Posterior cingulate gyrus (tissue), 11 donors: ENCODE measurements at regions of chr5 and their contacts with region 1.

Region 1: GRCh38 chr5:87791869-87792268 is 379.1 kb upstream of the CCNH start:
- DNase-seq: no peak

Region 2: DNA sequence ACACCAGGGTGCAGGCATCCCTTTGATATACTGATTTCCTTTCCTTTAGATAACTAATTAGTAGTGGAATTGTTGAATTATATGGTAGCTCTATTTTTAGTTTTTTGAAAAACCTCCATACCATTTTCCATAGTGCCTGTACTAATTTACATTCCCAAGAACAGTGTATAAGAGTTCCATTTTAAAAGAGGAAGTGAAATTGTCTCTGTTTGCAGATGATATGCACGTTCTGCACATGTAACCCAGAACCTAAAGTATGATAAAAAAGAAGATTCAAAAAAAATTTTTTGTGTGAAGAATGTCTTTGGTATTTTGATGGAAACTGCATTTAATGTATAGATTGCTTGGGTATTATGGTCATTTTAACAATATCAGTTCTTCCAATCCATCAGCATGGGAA is 44.8 kb after region 1 on chr5:
- intact Hi-C with region 1: no loop called
- DNase-seq: no peak

Region 3: DNA sequence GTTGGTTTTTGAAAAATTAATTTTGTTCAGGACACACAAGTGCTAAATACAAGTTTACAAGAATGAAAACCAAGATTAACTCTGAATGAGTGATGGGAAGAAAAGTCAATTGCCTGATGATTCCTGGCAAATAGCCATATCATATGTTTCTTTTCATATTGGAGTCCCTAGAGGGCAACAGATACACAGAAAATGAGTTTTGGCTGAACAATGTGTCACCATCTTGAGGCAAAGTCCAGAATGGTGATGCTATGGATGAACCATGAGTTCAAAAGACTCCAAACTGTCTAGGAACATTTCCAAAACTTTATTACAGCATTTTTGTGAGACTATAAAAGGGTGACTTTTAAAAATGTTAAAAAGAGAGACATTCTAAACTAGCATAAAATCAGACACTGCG is 93.9 kb after region 1 on chr5:
- intact Hi-C with region 1: loop called (anchors 5 kb)
- DNase-seq: no peak